Left lung (tissue), 14 donors: ENCODE measurements at regions of chr2 and their contacts with region 1.

Region 1: DNA sequence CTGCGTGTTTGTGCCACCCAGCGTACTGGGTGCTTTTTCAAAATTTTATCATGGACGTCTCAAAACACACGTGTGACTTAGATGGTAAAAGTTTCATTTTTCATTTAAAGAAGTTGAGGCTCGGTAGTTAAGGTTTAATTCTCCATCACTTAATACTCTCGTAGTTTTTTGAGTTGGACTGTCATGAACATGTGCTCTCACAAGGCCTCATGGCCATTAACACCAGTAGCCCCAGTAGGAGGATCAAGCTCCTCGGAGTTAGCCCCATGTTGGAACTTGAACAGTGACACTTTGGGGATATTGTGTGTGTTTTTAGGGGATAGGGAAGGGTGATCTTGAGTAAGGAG is 15.3 kb downstream of the NMUR1 start:
- DNase-seq: no peak
- ATAC-seq: no peak
- H3K4me3 ChIP-seq: peak overlapping the region; percentile 66 to 68
- H3K27ac ChIP-seq: peak overlapping the region; percentile 83 to 89
- H3K4me1 ChIP-seq: peaks cover 0 to 8% of the 10 kb centered on the region in 2 donors
- H3K27me3 ChIP-seq: no peaks in the 10 kb centered on the region
- CTCF ChIP-seq: no peak

Region 2: DNA sequence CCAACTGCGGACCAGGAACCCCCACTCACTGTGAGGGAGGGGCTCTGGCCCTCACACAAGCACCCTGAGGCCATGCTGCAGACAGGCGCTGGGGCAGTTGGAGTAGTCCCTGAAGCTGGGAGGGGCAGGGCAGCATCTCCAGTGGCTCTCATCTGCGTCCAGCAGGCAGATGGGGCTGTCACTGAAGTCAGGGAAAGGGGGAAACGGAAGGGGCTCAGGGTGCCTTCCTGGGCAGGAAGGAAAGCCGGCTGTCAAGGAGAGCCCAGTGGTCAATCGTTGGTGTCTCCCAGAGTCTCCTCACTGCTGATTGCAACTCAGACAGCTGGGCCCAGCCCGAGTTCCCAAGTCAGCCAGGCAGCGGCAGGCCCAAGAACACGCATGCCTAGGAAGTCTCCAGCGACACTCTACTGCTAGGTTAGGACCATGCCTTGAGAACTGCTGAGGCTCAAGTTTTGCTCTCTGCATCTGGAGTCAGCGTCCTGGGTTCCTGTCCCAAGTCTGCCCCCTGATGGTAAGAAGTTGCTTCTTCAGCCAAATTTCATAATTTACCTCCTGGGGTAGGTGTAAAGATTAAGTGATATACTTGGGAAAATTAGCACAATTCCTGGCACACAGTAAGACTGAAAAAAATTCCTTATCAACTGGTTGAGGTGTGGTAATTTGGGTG is 42.8 kb after region 1 on chr2:
- intact Hi-C with region 1: loop called in 1 of 2 experiments (anchors 5 kb)
- DNase-seq: peak; percentile 65 to 92 (median 74)
- ATAC-seq: peak; percentile 95
- H3K4me3 ChIP-seq: no peak overlapping the region
- H3K27ac ChIP-seq: peak overlapping the region in 1 of 2 donors; percentile 48
- H3K4me1 ChIP-seq: peaks cover 9 to 29% of the 10 kb centered on the region in 2 donors
- H3K27me3 ChIP-seq: no peaks in the 10 kb centered on the region
- CTCF ChIP-seq: peak; percentile 51 to 61

Region 3: DNA sequence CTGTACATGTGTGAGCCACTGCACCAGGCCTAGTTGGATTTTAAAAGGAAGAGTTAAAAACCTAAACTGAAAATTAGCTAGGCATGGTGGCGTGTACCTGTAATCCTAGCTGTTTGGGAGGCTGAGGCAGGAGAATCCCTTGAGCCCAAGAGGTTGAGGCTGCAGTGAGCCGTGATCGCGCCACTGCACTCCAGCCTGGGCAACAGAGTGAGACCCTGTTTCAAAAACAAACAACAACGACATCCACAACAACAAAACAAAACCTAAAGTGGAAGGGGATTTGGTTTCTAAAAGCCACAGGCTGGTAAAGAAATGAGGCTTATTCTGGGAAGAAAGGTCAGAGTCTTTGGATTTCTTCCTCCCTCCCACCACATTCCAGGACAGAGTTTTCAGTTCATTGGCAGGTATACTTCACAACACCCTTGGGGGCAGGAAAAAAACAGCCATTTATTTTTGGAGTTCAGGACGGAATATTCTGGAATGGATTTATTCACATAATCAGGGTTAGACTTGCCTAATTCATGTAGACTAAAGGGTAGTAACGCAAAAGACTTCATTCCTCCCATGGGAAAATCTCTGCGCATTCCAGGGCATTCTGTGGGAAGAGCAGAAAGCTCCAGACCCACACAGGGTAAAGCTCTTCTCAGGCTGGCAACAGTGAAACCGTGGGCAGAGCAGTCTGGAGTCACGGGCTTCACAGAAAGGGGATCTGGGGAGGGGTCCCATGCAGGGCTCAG is 112.6 kb after region 1 on chr2:
- intact Hi-C with region 1: no loop called
- DNase-seq: no peak
- ATAC-seq: no peak
- H3K4me3 ChIP-seq: no peak overlapping the region
- H3K27ac ChIP-seq: peak overlapping the region in 1 of 2 donors; percentile 23
- H3K4me1 ChIP-seq: peaks cover 0 to 8% of the 10 kb centered on the region in 2 donors
- H3K27me3 ChIP-seq: no peaks in the 10 kb centered on the region
- CTCF ChIP-seq: no peak